WTC11 (cell line): ENCODE measurements at regions of chr6 and their contacts with region 1.

Region 1: GRCh38 chr6:39102071-39102820 is 12.7 kb downstream of the SAYSD1 start:
- DNase-seq: peak; percentile 79
- ATAC-seq: peak; percentile 99
- H3K4me3 Mint-ChIP-seq: no peak overlapping the region
- H3K27ac Mint-ChIP-seq: no peak overlapping the region
- H3K4me1 Mint-ChIP-seq: peaks cover 6% of the 10 kb centered on the region; the same call in 1 of the 2 replicates
- H3K27me3 Mint-ChIP-seq: no peaks in the 10 kb centered on the region
- CTCF ChIP-seq: peak; percentile 60

Region 2: DNA sequence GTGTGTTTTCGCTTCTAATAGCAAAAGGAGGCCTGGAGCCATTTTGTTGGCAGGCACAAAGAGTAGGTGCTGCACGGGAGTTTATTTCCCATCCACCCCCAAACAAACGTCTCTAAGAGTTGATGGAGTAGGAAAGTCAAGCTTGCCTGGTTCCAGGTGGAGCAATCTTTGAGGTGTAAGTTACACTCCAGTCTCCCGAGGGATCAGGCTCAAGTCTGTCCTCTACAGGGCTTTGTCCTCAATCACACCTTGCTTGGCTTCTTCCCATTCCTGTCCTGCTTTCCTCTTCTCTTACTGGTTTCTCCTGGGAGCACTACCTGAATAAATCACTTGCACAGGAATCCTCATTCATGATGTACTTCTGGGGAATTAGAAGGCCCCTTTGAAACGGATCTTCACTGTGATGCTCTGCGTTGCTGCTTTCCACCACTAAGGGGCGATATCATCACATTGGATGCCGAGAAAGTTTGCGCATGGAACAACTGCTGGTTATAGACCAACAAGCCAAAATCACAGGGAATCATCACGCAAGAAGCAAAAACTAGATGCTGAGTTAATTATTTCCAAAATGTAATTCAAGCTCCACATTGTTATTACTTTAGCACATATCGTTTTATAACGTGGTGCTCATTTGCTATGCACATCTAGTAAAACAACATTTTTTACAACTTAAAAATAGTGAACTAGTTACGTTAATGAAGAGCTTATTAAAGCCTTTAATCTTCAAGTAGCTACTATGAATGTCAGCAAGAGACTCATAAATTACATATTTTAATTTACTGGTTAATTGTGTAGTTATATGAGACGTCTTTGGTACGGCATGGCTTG is 230.3 kb before region 1 on chr6:
- CTCF ChIA-PET with region 1: interaction called, 30 read pairs
- POLR2A ChIA-PET with region 1: no interaction called
- DNase-seq: peak; percentile 79
- ATAC-seq: peak; percentile 91
- H3K4me3 Mint-ChIP-seq: no peak overlapping the region
- H3K27ac Mint-ChIP-seq: no peak overlapping the region
- H3K4me1 Mint-ChIP-seq: peaks cover 18% of the 10 kb centered on the region
- H3K27me3 Mint-ChIP-seq: no peaks in the 10 kb centered on the region
- CTCF ChIP-seq: peak; percentile 83

Region 3: GRCh38 chr6:38997128-38997761 is 105.0 kb before region 1 on chr6:
- CTCF ChIA-PET with region 1: interaction called, 180 read pairs
- POLR2A ChIA-PET with region 1: no interaction called
- DNase-seq: peak; percentile 80
- ATAC-seq: peak; percentile 92
- H3K4me3 Mint-ChIP-seq: no peak overlapping the region
- H3K27ac Mint-ChIP-seq: no peak overlapping the region
- H3K4me1 Mint-ChIP-seq: no peaks in the 10 kb centered on the region
- H3K27me3 Mint-ChIP-seq: peaks cover 8% of the 10 kb centered on the region
- CTCF ChIP-seq: peak; percentile 82

Region 4: GRCh38 chr6:39029156-39030011 is 72.9 kb before region 1 on chr6:
- CTCF ChIA-PET with region 1: interaction called, 41 read pairs
- POLR2A ChIA-PET with region 1: no interaction called
- DNase-seq: peak; percentile 80
- ATAC-seq: peak; percentile 99
- H3K4me3 Mint-ChIP-seq: no peak overlapping the region
- H3K27ac Mint-ChIP-seq: no peak overlapping the region
- H3K4me1 Mint-ChIP-seq: peaks cover 8% of the 10 kb centered on the region
- H3K27me3 Mint-ChIP-seq: peaks cover 17% of the 10 kb centered on the region
- CTCF ChIP-seq: peak; percentile 92

Region 5: DNA sequence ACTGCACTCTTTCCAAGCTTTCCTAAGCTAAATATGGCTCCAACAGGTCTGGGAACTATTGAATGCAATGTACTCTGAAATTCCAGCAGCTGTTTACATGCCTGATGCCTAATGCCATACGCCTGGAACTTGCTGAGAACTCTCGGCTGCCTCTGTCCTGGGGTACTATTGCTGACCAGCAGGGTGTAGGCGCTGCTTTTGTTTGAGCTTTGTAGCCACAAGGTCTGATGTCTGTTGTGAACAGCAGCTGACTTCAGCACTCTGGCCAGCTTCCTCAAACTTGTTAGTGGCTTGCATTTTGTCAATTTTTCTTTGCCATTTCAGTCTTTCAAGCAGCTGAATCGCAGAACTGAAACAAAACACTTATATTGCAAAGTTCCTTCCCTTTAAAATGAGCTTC is 13.9 kb before region 1 on chr6:
- CTCF ChIA-PET with region 1: interaction called, 87 read pairs
- POLR2A ChIA-PET with region 1: interaction called, 3 read pairs
- DNase-seq: peak; percentile 75
- ATAC-seq: peak; percentile 91
- H3K4me3 Mint-ChIP-seq: no peak overlapping the region
- H3K27ac Mint-ChIP-seq: no peak overlapping the region
- H3K4me1 Mint-ChIP-seq: peaks cover 49% of the 10 kb centered on the region
- H3K27me3 Mint-ChIP-seq: no peaks in the 10 kb centered on the region; the same call in 1 of the 2 replicates
- CTCF ChIP-seq: no peak

Region 6: DNA sequence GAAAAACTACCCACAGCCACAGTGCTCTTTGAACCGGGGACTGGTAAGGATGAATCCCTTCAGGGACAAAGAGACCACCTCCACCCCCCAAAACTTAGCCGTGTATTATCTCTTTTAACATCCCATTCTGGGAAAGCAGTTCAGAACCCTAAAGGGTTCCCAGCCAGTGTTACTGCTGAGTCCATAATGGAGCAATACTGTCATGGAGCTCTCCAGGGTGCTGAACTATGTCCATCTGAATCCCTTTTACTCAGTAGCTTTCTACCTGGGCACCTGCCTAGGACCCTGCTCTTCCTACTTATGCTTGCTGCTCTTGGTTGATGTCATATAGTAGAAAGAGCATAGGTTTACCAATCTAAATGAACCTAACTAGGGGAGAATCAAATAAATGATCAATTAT is 35.0 kb after region 1 on chr6:
- CTCF ChIA-PET with region 1: interaction called, 10 read pairs
- POLR2A ChIA-PET with region 1: interaction called, 4 read pairs
- DNase-seq: peak; percentile 69
- ATAC-seq: peak; percentile 81
- H3K4me3 Mint-ChIP-seq: no peak overlapping the region
- H3K27ac Mint-ChIP-seq: no peak overlapping the region
- H3K4me1 Mint-ChIP-seq: peaks cover 13% of the 10 kb centered on the region
- H3K27me3 Mint-ChIP-seq: no peaks in the 10 kb centered on the region; the same call in 1 of the 2 replicates
- CTCF ChIP-seq: no peak